Ovary (tissue), 10 donors: ENCODE measurements at regions of chr2 and their contacts with region 1.

Region 1: GRCh38 chr2:238970553-238971081 is 122.7 kb downstream of the TWIST2 start:
- DNase-seq: peak; percentile 65 to 81 (median 76)
- H3K4me3 ChIP-seq: no peak overlapping the region
- H3K27ac ChIP-seq: no peak overlapping the region
- H3K4me1 ChIP-seq: peaks cover 16% of the 10 kb centered on the region
- H3K27me3 ChIP-seq: no peaks in the 10 kb centered on the region
- CTCF ChIP-seq: peak; percentile 89 to 95 (median 93)
- EP300 ChIP-seq: no peak
- POLR2A ChIP-seq: no peak

Region 2: GRCh38 chr2:238821391-238821790 is 149.2 kb before region 1 on chr2:
- intact Hi-C with region 1: no loop called
- DNase-seq: no peak
- H3K4me3 ChIP-seq: no peak overlapping the region
- H3K27ac ChIP-seq: no peak overlapping the region
- H3K4me1 ChIP-seq: peaks cover 1% of the 10 kb centered on the region
- H3K27me3 ChIP-seq: no peaks in the 10 kb centered on the region
- CTCF ChIP-seq: no peak
- EP300 ChIP-seq: no peak
- POLR2A ChIP-seq: no peak

Region 3: GRCh38 chr2:238847841-238848690 is 122.6 kb before region 1 on chr2 and contains the start of gene TWIST2:
- intact Hi-C with region 1: loop called in 1 of 4 experiments (anchors 5 kb)
- DNase-seq: peak; percentile 84 to 92 (median 88)
- H3K4me3 ChIP-seq: peak within 1 kb of the TSS; percentile 63
- H3K27ac ChIP-seq: peak within 1 kb of the TSS; percentile 80 to 90
- H3K4me1 ChIP-seq: peaks cover 7% of the 10 kb centered on the region
- H3K27me3 ChIP-seq: no peaks in the 10 kb centered on the region
- CTCF ChIP-seq: peak in 2 of 3 donors; percentile 17 to 42
- EP300 ChIP-seq: no peak
- POLR2A ChIP-seq: peak; percentile 56
- total RNA-seq, gene TWIST2: 17.8 to 104 (median 40.7) TPM